ENCODE measurements at regions of chr20 and their contacts with region 1.

Region 1: GRCh38 chr20:11544029-11544678 is 373.5 kb upstream of the BTBD3 start:
- DNase-seq: peak in 2 of 9 experiments; percentile 4 to 11
- ATAC-seq: no peak
- H3K4me3 ChIP-seq: no peak overlapping the region
- H3K4me3 Mint-ChIP-seq: no peak overlapping the region
- H3K27ac ChIP-seq: no peak overlapping the region
- H3K27ac Mint-ChIP-seq: no peak overlapping the region
- H3K4me1 ChIP-seq: no peaks in the 10 kb centered on the region
- H3K4me1 Mint-ChIP-seq: no peaks in the 10 kb centered on the region
- H3K27me3 ChIP-seq: no peaks in the 10 kb centered on the region
- H3K27me3 Mint-ChIP-seq: no peaks in the 10 kb centered on the region
- CTCF ChIP-seq: peak; percentile 22

Region 2: GRCh38 chr20:9626357-9626756 is 1917.8 kb before region 1 on chr20:
- CTCF ChIA-PET with region 1: no interaction called
- POLR2A ChIA-PET with region 1: no interaction called
- intact Hi-C with region 1: loop called in 1 of 2 experiments (anchors 10 kb)
- DNase-seq: no peak
- ATAC-seq: no peak
- H3K4me3 ChIP-seq: no peak overlapping the region
- H3K4me3 Mint-ChIP-seq: no peak overlapping the region
- H3K27ac ChIP-seq: no peak overlapping the region
- H3K27ac Mint-ChIP-seq: no peak overlapping the region
- H3K4me1 ChIP-seq: no peaks in the 10 kb centered on the region
- H3K4me1 Mint-ChIP-seq: no peaks in the 10 kb centered on the region
- H3K27me3 ChIP-seq: no peaks in the 10 kb centered on the region
- H3K27me3 Mint-ChIP-seq: no peaks in the 10 kb centered on the region
- CTCF ChIP-seq: no peak